A673 (cell line): ENCODE measurements at regions of chr20 and their contacts with region 1.

Region 1: GRCh38 chr20:40073535-40074111 is 615.4 kb downstream of the MAFB start:
- DNase-seq: peak; percentile 99
- H3K4me3 ChIP-seq: no peak overlapping the region
- H3K27ac ChIP-seq: peak overlapping the region; percentile 55
- H3K4me1 ChIP-seq: peaks cover 21% of the 10 kb centered on the region
- H3K27me3 ChIP-seq: no peaks in the 10 kb centered on the region
- CTCF ChIP-seq: no peak

Region 2: GRCh38 chr20:40233406-40233805 is 159.8 kb after region 1 on chr20:
- CTCF ChIA-PET with region 1: no interaction called
- POLR2A ChIA-PET with region 1: no interaction called
- intact Hi-C with region 1: loop called (anchors 10 kb)
- DNase-seq: peak; percentile 82
- H3K4me3 ChIP-seq: no peak overlapping the region
- H3K27ac ChIP-seq: peak overlapping the region; percentile 89
- H3K4me1 ChIP-seq: peaks cover 48% of the 10 kb centered on the region
- H3K27me3 ChIP-seq: no peaks in the 10 kb centered on the region
- CTCF ChIP-seq: no peak